Activated B cell treated with CpG ODN at 0.5 μM for 24 hours (primary cell): ENCODE measurements at regions of chr11 and their contacts with region 1.

Region 1: DNA sequence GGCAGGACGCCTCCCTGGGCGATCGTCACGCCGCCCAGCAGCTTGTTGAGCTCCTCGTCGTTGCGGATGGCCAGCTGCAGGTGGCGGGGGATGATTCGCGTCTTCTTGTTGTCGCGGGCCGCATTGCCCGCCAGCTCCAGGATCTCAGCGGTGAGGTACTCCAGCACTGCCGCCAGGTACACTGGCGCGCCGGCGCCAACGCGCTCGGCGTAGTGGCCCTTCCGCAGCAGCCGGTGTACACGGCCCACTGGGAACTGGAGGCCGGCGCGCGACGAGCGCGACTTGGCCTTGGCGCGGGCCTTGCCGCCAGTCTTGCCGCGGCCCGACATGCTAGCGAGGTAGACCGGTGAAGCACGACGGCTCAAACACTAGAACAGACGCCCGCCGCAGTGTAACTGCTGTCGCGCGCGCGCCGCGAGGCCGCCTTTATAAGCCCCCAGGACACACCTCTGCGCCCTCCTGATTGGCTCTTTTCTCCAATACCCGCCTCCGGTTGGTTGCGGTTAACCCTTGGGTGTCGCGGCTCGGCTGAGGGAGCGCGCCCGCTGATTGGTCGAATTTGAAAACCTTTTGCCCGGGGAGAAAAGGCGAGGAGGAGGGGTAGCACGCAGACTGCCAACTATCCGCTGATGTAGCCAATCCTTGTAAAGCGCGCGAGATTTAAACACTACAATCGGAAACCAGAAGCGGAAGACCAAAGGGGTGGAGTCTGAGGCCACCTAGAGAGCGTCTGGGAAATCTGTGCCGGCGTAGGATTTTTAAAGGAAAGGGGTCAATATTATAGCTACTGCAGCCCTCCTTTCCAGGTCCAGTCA is 6.4 kb downstream of the DPAGT1 start:
- DNase-seq: peak; percentile 96
- ATAC-seq: peak; percentile 87
- H3K4me3 Mint-ChIP-seq: peak overlapping the region; percentile 92
- H3K27ac Mint-ChIP-seq: peak overlapping the region; percentile 89
- H3K4me1 Mint-ChIP-seq: peaks cover 50% of the 10 kb centered on the region
- H3K27me3 Mint-ChIP-seq: no peaks in the 10 kb centered on the region
- CTCF ChIP-seq: no peak

Region 2: DNA sequence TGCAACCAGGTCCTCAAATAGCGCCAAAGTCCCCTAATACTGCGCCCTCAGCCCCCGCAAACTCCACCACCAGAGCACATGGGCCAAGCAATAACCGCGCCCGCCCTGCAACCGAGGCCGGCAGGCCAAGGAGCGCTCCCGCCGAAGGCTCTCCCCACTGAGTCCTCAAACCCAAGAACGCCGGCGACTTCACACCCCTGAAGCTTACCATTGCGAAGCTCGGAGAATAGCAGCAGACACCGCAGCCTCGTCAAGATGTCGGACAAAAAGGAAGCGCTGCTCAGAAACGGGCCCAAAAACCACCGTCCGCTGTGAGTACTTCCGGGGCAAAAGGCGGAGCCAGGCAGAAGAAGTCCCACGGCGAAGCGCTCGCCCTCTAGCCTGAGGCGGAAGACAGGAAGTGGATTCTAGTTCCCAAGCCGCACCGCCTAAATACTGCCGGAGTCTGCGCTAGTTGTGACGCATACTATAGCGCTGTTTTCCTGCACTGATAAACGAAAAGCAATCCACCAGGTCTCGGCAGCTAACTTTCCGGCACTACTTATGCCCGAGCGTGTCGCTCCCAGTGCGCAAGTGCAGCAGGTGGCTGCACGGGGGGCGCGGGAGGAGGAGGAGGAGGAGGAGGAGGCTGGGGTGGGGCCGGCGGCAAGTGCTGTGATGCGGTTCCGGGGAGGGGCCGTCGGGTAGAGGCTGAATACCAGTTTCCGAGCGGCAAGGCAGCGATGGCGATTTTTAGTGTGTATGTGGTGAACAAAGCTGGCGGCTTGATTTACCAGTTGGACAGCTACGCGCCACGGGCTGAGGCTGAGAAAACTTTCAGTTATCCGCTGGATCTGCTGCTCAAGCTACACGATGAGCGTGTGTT is 77.0 kb before region 1 on chr11 and contains the starts of genes RPS25 and TRAPPC4:
- CTCF ChIA-PET with region 1: no interaction called
- POLR2A ChIA-PET with region 1: interaction called, 17 read pairs
- intact Hi-C with region 1: loop called (anchors 1 kb)
- DNase-seq: peak; percentile 90
- ATAC-seq: peak; percentile 87
- H3K4me3 Mint-ChIP-seq: peak within 1 kb of the TSS; percentile 99
- H3K27ac Mint-ChIP-seq: peak within 1 kb of the TSS; percentile 100
- H3K4me1 Mint-ChIP-seq: peaks cover 54% of the 10 kb centered on the region
- H3K27me3 Mint-ChIP-seq: no peaks in the 10 kb centered on the region
- CTCF ChIP-seq: no peak
- total RNA-seq, gene RPS25: 2,191 and 2,534 TPM in 2 replicates
- total RNA-seq, gene TRAPPC4: 56.8 and 60.1 TPM in 2 replicates

Region 3: DNA sequence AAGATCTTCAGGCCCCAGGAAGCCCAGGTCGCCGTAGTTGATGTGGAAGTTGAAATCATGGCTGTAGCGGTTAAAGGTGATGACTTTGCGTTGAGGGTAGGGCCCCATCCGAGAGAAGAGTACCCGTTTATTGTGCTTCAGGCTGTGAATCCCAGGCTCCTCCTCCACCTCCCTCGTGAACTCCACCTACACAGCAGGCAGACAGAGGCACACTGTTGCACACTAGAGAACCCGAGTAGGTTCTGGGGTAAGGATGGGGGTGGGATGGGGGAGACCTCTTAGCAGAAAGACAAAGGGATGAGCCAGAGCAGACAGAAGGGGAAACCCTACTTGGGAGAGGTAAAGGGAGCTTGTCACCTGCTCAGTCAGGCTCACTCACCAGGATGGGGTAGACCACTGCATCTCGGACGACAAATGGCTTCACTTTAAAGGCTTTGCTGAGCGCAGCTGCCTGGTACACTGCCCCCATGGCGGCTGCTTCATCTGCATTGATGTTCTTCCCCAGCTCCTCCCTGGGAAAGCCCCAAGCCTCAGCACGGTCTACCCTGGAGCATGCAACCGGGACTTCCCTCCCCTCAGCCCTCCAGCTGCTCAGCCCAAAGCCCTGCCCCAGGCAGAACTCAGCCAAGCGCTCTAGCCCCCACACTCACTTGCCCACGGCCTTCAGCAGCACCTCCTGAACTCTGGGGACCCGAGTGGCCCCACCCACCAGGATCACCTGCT is 43.7 kb before region 1 on chr11:
- CTCF ChIA-PET with region 1: no interaction called
- POLR2A ChIA-PET with region 1: interaction called, 18 read pairs
- intact Hi-C with region 1: no loop called
- DNase-seq: peak; percentile 47
- ATAC-seq: peak; percentile 85
- H3K4me3 Mint-ChIP-seq: peak overlapping the region; percentile 39
- H3K27ac Mint-ChIP-seq: peak overlapping the region; percentile 71
- H3K4me1 Mint-ChIP-seq: peaks cover 40% of the 10 kb centered on the region
- H3K27me3 Mint-ChIP-seq: no peaks in the 10 kb centered on the region
- CTCF ChIP-seq: no peak

Region 4: DNA sequence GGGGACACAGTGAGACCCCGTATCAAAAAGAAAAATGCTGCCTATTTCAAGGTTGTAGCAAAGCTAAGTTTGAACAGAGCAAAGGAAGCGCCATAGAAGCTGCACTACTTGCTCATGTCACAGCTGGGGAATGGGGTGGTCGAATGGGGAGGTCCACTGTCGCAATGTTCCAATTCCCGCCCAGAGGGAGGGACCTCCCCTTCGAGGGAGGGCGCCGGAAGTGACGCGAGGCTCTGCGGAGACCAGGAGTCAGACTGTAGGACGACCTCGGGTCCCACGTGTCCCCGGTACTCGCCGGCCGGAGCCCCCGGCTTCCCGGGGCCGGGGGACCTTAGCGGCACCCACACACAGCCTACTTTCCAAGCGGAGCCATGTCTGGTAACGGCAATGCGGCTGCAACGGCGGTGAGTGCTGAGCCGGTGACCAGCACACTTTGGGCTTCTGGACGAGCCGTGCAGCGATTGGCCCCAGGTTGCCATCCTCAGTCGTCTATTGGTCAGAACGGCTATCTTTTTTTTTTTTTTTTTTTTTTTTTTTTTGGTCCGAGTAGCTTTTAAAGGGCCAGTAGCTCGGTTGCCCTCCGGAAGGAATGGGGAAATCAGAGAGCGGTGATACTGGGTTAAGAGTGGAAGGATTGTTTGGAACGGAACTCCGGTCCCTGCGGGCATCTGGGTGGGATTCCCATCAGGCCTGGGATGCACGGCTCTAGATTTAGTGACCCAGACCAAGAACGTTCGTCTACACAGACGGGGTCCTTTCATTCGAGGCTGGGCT is 10.4 kb before region 1 on chr11 and contains the start of gene HMBS:
- CTCF ChIA-PET with region 1: interaction called, 5 read pairs
- POLR2A ChIA-PET with region 1: interaction called, 69 read pairs
- intact Hi-C with region 1: loop called (anchors 1 kb)
- DNase-seq: peak; percentile 92
- ATAC-seq: peak; percentile 90
- H3K4me3 Mint-ChIP-seq: peak within 1 kb of the TSS; percentile 95
- H3K27ac Mint-ChIP-seq: peak within 1 kb of the TSS; percentile 93
- H3K4me1 Mint-ChIP-seq: peaks cover 12% of the 10 kb centered on the region
- H3K27me3 Mint-ChIP-seq: no peaks in the 10 kb centered on the region
- CTCF ChIP-seq: no peak
- total RNA-seq, gene HMBS: 17.5 and 26.9 TPM in 2 replicates

Region 5: DNA sequence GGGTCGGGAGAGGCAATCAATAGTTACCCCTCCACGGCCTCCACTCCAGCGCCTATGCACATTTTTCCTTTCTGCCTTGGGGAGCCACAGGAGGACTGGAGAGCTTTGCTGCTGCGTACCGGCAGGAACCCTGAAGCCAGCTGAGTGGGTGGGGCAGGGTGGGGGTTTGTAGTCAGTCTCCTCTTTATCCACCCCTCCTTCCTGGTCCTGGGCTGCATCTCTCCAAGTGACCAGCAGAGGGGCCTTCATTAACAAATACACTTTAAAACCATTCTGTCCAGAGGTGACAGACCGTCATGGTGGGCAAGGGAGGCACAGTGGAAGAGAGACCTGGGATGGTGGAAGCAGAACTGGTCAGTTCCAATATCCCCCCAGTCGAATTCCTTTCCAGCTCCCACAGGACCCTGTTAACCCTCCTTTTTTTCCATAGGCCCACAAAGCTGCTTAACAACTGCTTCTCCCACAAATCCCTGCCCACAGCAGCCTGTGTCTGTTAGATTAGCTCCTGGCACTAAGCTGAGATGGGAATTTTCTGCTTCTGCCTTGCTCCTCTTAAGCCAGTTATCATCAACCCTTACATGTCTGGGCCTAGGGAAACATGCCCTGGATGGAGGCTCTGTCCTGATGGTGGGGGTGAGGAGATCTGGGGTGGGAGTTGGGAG is 49.7 kb after region 1 on chr11:
- CTCF ChIA-PET with region 1: no interaction called
- POLR2A ChIA-PET with region 1: interaction called, 13 read pairs
- intact Hi-C with region 1: no loop called
- DNase-seq: no peak
- ATAC-seq: peak; percentile 78
- H3K4me3 Mint-ChIP-seq: no peak overlapping the region
- H3K27ac Mint-ChIP-seq: no peak overlapping the region
- H3K4me1 Mint-ChIP-seq: peaks cover 12% of the 10 kb centered on the region
- H3K27me3 Mint-ChIP-seq: peaks cover 41% of the 10 kb centered on the region
- CTCF ChIP-seq: no peak

Region 6: GRCh38 chr11:119196833-119197483 is 101.7 kb after region 1 on chr11:
- CTCF ChIA-PET with region 1: interaction called, 5 read pairs
- POLR2A ChIA-PET with region 1: interaction called, 5 read pairs
- intact Hi-C with region 1: loop called (anchors 1 kb)
- DNase-seq: no peak
- ATAC-seq: peak; percentile 98
- H3K4me3 Mint-ChIP-seq: no peak overlapping the region
- H3K27ac Mint-ChIP-seq: no peak overlapping the region
- H3K4me1 Mint-ChIP-seq: peaks cover 5% of the 10 kb centered on the region
- H3K27me3 Mint-ChIP-seq: no peaks in the 10 kb centered on the region
- CTCF ChIP-seq: peak; percentile 21